CD8-positive, alpha-beta T cell (primary cell): ENCODE measurements at regions of chr11 and their contacts with region 1.

Region 1: DNA sequence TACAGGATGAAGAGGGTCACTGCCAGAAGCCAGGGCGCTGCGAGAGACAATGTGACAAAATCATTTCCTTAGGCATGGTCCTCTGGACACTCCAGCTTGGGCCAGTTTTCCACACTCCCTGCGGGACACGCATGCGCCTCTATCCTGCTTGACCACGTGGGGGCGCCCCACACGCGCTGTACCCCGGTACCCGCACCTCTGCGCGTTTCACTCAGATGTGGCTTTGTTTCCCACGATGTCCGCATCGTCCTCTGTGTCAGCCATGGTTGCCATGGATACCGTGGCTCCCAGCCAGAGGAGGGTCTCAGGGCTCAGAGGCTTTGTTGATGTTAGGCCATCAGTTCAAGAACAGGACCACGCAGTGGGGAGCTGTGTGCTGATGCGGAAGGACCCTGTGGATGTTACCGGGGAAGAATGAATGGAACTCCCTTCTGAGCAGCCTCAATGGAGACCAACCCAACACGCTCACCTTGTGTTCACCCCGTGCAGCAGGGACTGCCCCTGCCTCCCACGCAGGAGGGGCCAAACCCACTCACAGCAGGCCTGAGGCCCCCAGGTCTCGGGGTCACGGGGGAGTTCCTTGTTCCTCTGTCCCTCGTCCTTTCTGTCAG is 101.1 kb upstream of the SLC22A12 start:
- DNase-seq: peak in 7 of 9 experiments; percentile 4 to 57 (median 41)
- ATAC-seq: no peak
- H3K4me3 ChIP-seq: no peak overlapping the region
- H3K4me3 Mint-ChIP-seq: no peak overlapping the region
- H3K27ac ChIP-seq: no peak overlapping the region
- H3K27ac Mint-ChIP-seq: no peak overlapping the region
- H3K4me1 ChIP-seq: peaks cover 3% of the 10 kb centered on the region
- H3K4me1 Mint-ChIP-seq: peaks cover 2% of the 10 kb centered on the region
- H3K27me3 ChIP-seq: no peaks in the 10 kb centered on the region
- H3K27me3 Mint-ChIP-seq: peaks cover 42% of the 10 kb centered on the region
- CTCF ChIP-seq: peak; percentile 62

Region 2: GRCh38 chr11:64652586-64653387 is 162.9 kb after region 1 on chr11:
- CTCF ChIA-PET with region 1: no interaction called
- POLR2A ChIA-PET with region 1: no interaction called
- intact Hi-C with region 1: loop called in 1 of 2 experiments (anchors 10 kb)
- DNase-seq: peak; percentile 43 to 79 (median 71)
- ATAC-seq: peak; percentile 93
- H3K4me3 ChIP-seq: no peak overlapping the region
- H3K4me3 Mint-ChIP-seq: no peak overlapping the region
- H3K27ac ChIP-seq: no peak overlapping the region
- H3K27ac Mint-ChIP-seq: no peak overlapping the region
- H3K4me1 ChIP-seq: no peaks in the 10 kb centered on the region
- H3K4me1 Mint-ChIP-seq: no peaks in the 10 kb centered on the region
- H3K27me3 ChIP-seq: no peaks in the 10 kb centered on the region
- H3K27me3 Mint-ChIP-seq: peaks cover 9% of the 10 kb centered on the region
- CTCF ChIP-seq: peak; percentile 59